Posterior cingulate gyrus (tissue), 11 donors: ENCODE measurements at regions of chr13 and their contacts with region 1.

Region 1: GRCh38 chr13:91348906-91349435 is 1.5 kb downstream of the MIR17HG start:
- DNase-seq: peak; percentile 86 to 98 (median 91)

Region 2: GRCh38 chr13:91313103-91313502 is 35.9 kb before region 1 on chr13:
- intact Hi-C with region 1: loop called (anchors 5 kb)
- DNase-seq: no peak

Region 3: DNA sequence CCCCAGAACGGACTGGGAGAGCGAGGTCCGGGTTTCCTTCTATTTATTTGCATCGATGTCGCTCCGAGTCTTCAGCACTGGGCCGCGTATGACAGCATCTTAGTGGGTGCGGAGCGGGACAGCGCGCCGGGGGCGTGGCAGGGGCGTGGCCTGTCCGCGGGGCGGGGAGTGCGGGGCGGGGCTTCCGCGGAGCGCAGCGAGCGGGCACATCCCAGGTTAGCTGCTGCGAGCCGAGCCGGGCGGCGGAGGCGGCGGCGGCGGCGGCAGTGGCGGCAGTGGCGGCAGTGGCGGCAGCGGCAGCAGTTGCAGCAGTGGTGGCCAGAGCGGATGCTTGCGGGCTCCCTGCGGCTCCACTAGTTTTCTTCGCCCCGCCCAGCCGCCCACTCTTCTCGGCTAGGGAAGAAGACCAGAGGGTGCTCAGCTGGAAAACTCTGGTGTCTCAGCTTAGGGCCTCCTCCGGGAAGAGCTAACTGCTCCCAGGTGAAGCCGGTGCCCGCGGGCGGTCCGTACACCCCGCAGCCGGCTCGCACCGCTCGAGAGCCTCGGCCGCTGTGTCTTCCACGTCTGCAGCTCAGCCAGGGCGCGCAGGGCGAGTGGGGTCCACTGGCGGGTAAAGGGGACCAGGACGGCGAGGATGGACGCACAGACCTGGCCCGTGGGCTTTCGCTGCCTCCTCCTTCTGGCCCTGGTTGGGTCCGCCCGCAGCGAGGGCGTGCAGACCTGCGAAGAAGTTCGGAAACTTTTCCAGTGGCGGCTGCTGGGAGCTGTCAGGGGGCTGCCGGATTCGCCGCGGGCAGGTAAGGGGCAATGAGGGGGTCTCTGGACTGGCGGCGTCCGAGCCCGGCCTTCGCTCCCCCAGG is 49.7 kb after region 1 on chr13 and contains the start of gene GPC5:
- intact Hi-C with region 1: loop called (anchors 5 kb)
- DNase-seq: peak; percentile 74 to 97 (median 84)